BJ (cell line): ENCODE measurements at regions of chr14 and their contacts with region 1.

Region 1: GRCh38 chr14:22276913-22277816 is 311.9 kb downstream of the DAD1 start:
- DNase-seq: no peak
- H3K4me3 ChIP-seq: no peak overlapping the region
- H3K27me3 ChIP-seq: no peaks in the 10 kb centered on the region
- CTCF ChIP-seq: peak; percentile 70

Region 2: DNA sequence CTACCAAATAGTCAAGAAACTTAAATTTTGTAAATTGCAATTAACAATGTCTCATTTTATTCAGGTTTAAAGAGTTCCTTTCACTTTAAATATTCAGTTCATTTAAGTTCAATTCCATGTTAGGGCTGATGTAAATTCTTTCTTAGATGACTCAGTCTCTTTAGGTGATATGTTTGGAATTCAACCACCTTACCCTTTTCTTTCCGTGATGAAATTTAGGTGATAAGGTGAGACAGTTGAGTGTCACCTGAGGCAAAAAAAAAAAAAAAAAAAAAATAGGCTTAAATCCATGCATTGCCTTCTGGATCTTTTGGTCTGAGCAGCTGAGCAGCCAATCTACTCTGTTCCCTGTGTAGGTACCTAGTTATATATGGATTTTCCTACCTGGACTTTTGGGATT is 12.4 kb after region 1 on chr14:
- CTCF ChIA-PET with region 1: interaction called, 25 read pairs
- POLR2A ChIA-PET with region 1: no interaction called
- DNase-seq: no peak
- H3K4me3 ChIP-seq: no peak overlapping the region
- H3K27me3 ChIP-seq: no peaks in the 10 kb centered on the region
- CTCF ChIP-seq: no peak